Panc1 (cell line): ENCODE measurements at regions of chr2 and their contacts with region 1.

Region 1: GRCh38 chr2:35783725-35784124 is 571.9 kb upstream of the CRIM1 start:
- DNase-seq: no peak
- ATAC-seq: no peak
- H3K4me3 ChIP-seq: no peak overlapping the region
- H3K27ac ChIP-seq: no peak overlapping the region
- H3K4me1 ChIP-seq: no peaks in the 10 kb centered on the region
- H3K27me3 ChIP-seq: no peaks in the 10 kb centered on the region
- CTCF ChIP-seq: peak; percentile 7; the same call in 1 of the 2 replicates

Region 2: GRCh38 chr2:35731674-35732073 is 52.1 kb before region 1 on chr2:
- CTCF ChIA-PET with region 1: no interaction called
- POLR2A ChIA-PET with region 1: no interaction called
- in situ Hi-C with region 1: no loop called
- intact Hi-C with region 1: loop called (anchors 10 kb)
- DNase-seq: no peak
- ATAC-seq: no peak
- H3K4me3 ChIP-seq: no peak overlapping the region
- H3K27ac ChIP-seq: no peak overlapping the region
- H3K4me1 ChIP-seq: no peaks in the 10 kb centered on the region
- H3K27me3 ChIP-seq: no peaks in the 10 kb centered on the region
- CTCF ChIP-seq: no peak